Cardiac septum (tissue), 1 donor: ENCODE measurements at regions of chr2 and their contacts with region 1.

Region 1: DNA sequence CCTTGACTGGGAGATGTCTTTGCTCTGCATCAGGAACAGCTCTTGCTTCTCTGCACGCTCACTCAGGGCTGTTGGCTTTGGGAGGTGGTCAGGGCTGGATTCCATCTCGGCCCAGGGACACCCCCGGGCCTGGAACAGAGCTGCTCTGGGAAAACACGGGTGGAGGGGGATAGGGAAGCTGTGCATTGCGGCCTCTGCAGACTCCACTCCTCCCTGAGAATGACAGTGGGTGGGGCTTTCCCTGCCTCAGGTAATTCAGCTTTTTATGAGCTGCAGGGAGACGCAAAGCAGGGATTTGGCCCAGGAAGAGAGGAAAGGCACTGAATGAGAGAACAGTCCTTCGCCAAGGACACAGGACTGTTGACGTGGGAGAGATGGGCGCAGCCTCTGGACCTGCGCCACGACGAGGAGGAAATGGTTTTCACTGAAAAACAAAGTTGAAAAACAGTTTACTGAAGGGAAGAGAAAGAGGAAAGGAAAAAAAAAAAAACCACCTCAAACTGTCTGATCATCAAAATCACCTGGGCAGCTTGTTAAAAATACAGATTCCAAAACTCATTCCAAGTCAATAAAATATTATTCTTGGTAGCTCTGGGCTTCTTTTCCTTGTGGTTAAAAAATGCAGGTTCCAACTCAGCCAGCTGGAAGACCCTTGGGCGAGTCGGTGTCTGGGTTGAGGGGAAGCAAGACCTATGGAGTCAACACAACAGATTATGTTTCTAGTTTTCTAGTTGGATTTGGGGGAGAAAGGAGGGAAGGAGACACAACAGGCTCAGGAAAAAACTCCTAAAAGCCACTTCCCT is 194.0 kb downstream of the ZFP36L2 start:
- DNase-seq: no peak

Region 2: DNA sequence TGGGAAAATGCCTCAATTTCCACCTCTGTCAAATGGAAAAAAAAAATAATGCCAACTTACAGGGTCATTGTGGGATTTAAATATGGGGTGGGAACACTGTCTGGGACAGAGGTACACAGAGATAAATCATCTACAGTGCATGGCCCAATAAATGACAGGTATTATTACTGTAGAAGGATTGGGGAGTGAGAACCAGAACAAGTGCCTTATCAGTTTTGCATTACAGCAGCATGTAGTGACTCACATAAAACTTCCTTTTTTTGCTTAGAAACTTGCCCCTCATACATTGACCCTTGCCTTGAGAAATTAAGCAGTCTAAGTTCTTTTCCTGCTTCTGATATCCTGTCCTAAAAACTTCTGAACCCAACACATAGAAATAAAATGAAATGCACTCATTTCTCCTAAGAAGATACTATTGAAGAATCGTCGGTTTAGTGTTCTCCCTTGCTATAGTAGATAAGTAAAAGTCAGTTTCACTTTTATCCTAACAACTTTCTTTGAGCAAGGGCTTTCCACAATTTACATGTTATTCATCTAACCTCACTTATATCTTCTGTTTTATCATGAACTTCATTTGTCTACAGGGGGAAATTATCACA is 119.0 kb before region 1 on chr2:
- intact Hi-C with region 1: no loop called
- DNase-seq: no peak

Region 3: DNA sequence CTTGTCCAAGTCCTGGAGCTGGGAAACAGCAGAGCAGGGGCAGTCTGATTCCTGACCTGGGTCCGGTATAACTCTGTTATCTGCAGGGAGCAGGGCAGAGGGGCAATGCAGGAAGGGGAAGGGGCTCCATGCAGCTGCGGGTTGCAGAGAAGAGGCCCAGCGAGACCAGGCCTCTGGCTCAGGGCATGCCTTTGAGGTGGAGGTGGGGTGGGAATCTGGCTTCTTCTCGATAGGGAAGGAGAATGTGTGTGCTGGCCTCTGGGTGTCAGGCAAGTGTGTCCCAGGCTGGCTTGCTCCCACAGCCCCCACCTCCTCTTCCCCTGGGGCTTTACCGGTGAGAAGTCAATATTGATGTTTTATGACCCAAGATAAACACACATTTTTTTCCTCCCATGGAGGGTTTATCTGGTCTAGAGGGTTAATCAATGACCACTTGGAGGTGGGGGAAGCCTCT is 53.0 kb before region 1 on chr2:
- intact Hi-C with region 1: no loop called
- DNase-seq: peak; percentile 38

Region 4: GRCh38 chr2:43073368-43073767 is 41.0 kb after region 1 on chr2:
- intact Hi-C with region 1: loop called (anchors 5 kb)
- DNase-seq: peak; percentile 74

Region 5: DNA sequence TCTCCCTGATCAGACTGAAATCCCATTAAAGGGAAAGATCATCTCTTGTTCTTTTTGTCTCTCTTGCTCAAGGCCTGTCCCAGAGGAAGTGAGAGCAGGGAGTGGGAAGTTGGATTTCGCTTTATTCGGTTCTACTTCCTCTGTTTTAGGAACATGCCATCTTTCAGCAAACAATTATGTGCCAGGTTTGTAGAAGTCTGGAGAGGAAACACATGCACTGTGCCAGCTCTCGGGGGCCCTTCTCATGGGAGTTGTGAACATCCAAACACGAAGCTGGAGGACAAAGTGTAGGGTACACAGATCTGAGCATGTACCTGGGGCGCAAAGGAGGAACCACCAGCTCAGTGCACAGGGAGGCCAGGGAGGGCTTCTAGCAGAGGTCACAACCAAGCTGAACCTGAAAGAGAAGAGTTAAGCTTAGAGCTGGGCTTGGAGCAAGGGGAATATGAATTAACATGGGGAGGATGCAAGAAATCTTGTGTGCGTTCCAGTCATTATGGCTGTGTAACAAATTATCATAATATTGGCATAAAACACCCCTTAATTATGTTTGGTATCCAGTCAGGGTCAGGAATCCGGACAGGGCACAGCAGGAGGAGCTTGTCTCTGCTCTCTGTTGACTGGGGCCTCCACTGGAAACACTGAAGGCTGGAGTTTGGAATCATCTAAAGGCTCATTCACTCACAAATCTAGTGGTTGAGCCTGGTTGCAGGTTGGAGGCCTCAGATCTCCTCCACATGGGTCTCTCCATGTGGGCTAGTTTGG is 65.4 kb after region 1 on chr2:
- intact Hi-C with region 1: no loop called
- DNase-seq: no peak